ENCODE measurements at regions of chr9 and their contacts with region 1.

Region 1: DNA sequence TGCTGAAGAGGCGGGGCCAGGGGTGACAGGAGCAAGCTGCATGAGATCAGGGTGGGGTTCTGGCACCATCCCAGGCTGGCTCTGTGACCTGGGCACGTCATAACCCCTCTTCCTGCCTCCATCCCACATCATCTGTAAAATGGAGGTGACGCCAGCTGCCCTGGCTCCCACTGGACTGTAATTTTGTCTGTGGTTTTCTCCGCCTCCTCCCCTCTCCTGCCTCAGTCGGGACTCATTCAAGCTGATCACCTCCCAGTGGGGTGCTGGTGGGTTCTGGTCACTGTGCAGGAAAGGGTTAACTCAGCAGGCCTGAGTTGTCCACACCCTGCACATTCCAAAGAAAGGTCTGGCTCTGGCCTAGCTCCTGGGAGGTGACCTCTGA is 128.2 kb downstream of the RXRA start:
- DNase-seq: no peak
- H3K4me3 ChIP-seq: no peak overlapping the region
- H3K27ac ChIP-seq: no peak overlapping the region
- H3K4me1 ChIP-seq: peaks cover 19 to 39% (median 25%) of the 10 kb centered on the region in 4 donors
- H3K27me3 ChIP-seq: no peaks in the 10 kb centered on the region
- CTCF ChIP-seq: no peak

Region 2: DNA sequence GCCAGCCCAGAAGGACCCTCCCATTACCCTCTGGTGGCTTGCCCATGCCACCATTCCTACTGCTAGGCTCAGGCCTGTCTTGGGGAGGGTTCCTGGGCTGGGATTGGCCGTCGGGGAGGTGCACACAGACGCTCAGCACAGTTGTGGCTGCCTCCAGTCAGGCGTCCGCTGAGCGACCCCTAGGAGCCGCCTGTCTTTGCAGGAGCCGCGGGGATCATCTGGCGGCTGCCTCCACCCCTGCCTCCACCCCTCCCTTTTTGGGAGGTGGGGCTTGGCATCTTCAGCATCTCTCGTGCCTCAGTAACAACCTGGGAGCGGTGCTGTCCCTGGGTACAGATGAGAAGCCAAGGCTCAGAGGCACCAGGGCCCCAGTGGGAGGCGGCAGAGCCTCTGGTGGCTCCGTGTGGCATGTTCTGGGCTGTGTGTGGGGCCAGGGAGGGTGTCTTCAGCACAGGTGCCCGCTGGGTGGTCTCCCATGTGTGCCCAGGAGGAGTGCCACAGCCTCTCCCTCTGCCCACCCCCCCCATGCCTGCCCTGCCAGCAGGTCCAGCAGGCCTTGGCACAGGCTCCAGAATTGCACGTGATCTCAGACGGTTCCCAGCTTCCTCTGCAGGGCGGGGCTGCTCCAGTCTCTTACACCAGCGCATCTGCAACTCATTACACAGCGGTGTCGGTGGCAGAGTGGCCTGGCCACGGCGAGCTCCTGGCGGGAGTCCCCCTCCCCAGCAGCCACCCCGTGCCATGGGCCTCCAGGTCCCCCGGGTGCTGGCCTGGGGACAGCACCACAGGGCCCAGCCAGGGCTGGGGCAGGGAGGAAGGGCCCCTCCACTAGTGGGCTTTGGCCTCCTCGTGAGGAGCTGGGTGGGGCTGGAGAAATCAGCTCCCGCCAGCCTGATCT is 88.4 kb before region 1 on chr9:
- intact Hi-C with region 1: no loop called
- DNase-seq: peak; percentile 93 to 96
- H3K4me3 ChIP-seq: peak overlapping the region; percentile 19 to 40
- H3K27ac ChIP-seq: peak overlapping the region; percentile 59 to 73
- H3K4me1 ChIP-seq: peaks cover 15 to 89% (median 51%) of the 10 kb centered on the region in 4 donors
- H3K27me3 ChIP-seq: no peaks in the 10 kb centered on the region
- CTCF ChIP-seq: peak in 1 of 2 experiments; percentile 17

Region 3: GRCh38 chr9:134492281-134492691 is 37.8 kb after region 1 on chr9:
- intact Hi-C with region 1: no loop called
- DNase-seq: peak; percentile 68 to 75
- H3K4me3 ChIP-seq: no peak overlapping the region
- H3K27ac ChIP-seq: no peak overlapping the region
- H3K4me1 ChIP-seq: no peaks in the 10 kb centered on the region
- H3K27me3 ChIP-seq: peaks cover 0 to 25% of the 10 kb centered on the region in 2 donors
- CTCF ChIP-seq: no peak

Region 4: DNA sequence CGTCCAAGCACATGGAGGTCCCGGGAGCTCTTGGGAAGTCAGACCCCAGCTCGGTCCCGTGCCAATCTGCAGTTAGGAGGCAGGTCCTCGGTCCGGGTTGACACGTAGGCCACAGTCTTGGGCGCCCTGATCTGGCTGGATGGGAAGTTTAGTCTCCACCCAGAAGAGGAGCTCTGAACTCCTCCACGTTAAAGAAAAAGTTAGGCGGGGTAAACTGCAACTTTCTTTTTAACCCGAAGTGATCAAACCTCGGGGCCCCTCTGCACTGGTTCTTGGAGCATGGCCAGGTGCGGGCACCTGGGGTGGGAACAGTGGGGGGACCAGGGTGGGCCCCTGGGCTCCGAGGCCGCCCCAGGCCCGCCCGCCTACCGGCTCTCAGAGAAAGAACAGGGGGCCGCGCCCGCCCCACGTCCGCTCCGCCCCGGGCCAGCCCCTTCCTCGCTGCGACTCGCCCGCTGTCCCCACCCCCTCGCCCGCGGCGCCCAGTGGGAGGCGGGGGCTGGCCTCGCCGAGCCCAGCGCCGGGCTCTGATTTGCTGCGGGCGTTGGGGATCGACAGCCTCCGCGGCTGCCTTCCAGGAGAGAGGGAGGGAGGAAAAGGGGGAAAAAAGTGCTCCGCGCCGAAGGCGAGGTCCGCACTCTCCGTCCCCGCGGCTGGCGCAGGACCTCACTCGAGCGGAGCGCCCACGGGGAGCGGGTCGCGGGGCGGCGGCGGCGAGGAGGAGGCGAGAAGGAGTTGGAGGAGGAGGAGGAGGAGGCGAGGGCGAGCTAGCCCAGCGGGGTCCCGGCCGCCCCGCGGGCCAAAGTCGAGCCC is 186.9 kb after region 1 on chr9 and contains the start of gene COL5A1:
- intact Hi-C with region 1: loop called (anchors 5 kb)
- DNase-seq: peak; percentile 91 to 97
- H3K4me3 ChIP-seq: peak within 1 kb of the TSS; percentile 82 to 91
- H3K27ac ChIP-seq: peak within 1 kb of the TSS; percentile 96 to 98
- H3K4me1 ChIP-seq: peaks cover 0 to 44% (median 27%) of the 10 kb centered on the region in 4 donors
- H3K27me3 ChIP-seq: no peaks in the 10 kb centered on the region
- CTCF ChIP-seq: peak; percentile 44 to 60

Region 5: DNA sequence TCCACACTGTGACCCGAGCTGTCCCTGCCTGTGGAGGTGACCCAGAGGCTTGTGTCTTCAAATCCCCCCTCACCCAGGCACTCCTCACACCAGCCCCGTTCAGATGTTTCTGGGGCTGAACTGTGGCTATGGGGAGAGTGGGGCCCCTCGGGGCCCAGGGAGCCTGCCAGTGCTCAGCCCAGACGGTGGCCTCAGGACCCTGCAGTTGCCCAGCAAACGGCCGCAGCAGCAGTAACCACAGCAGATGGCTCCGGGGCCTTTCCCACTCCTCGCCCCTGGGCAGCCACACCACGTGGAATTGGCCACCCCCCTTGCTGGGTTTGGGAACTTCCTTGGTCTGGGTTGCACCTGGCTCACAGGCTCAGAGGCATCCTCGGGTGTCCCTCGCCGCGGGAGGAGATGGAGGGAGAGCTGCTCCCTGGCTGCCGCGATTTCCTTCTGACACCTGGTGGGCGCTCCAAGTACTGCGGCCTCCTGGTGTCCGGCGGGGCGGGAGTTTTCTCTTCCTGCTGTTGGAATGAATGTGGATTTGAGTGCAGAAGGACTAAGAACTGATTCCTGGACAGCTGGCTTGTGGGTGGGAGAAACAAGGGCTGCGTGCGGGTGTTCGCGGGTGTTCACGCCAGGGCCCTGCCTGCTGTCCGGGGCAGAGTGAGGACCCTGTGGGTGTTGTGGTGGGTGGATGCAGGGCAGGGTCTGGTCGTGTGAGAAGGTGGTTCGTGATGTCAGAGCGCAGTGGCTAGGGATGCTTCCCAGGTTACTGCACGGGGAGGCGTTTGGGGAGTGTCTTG is 284.6 kb after region 1 on chr9:
- intact Hi-C with region 1: loop called (anchors 5 kb)
- DNase-seq: peak; percentile 70 to 84
- H3K4me3 ChIP-seq: no peak overlapping the region
- H3K27ac ChIP-seq: no peak overlapping the region
- H3K4me1 ChIP-seq: peaks cover 0 to 18% (median 2%) of the 10 kb centered on the region in 4 donors
- H3K27me3 ChIP-seq: no peaks in the 10 kb centered on the region
- CTCF ChIP-seq: peak; percentile 91 to 92